Activated T-helper 2 cell treated with anti-CD3 and anti-CD28 coated beads, Interferon-gamma antibody, Interleukin-2, Interleukin-4, amounts not matched to agents 10 μg/mL and 5 μg/mL and 100 μg/mL, durations not matched to agents 14 hours and 24 hours and 36 hours (primary cell): ENCODE measurements at regions of chr20 and their contacts with region 1.

Region 1: GRCh38 chr20:38221119-38221589 is 39.4 kb downstream of the KIAA1755 start:
- DNase-seq: peak; percentile 40
- H3K4me3 Mint-ChIP-seq: no peak overlapping the region
- H3K27ac Mint-ChIP-seq: no peak overlapping the region
- H3K4me1 Mint-ChIP-seq: no peaks in the 10 kb centered on the region
- H3K27me3 Mint-ChIP-seq: no peaks in the 10 kb centered on the region

Region 2: DNA sequence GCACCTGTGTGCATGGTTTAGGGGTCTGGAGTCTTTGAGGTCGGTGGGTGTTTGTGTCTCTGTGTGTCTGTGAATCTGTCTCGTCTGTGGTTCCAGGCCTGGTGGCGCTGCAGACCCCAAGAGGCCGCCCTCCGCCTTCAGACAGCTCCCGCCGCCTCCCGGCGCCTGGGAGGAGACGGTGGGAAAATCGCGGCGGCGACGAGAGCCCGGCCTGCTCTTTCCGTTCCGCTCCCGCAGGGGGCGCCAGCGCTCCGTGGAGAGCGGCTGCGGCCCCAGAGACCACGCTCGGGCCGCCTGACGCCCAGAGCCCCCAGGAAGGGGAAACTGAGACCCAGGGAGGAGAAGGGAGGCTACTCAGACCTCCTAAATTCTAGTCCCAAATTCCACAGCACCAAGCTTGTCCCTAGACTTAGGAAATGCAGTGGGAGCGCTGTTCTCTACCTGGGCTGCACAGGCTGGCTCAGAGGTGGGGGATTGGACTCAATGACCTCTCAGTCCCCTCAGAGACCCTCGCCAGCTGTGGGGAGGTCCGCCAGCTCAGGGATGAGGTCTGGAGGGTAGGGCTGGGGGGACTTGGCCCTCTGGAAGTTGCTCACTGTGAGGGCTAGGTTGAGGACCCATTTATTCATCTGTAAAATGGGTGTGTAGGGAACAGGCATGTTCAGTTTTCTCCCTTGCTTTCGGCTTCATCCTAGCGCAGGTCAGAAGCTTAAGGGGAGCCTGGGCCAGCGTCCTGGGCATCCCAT is 656.6 kb before region 1 on chr20:
- intact Hi-C with region 1: loop called (anchors 10 kb)
- DNase-seq: peak; percentile 22
- H3K4me3 Mint-ChIP-seq: no peak overlapping the region
- H3K27ac Mint-ChIP-seq: no peak overlapping the region
- H3K4me1 Mint-ChIP-seq: no peaks in the 10 kb centered on the region
- H3K27me3 Mint-ChIP-seq: peaks cover 32% of the 10 kb centered on the region

Region 3: DNA sequence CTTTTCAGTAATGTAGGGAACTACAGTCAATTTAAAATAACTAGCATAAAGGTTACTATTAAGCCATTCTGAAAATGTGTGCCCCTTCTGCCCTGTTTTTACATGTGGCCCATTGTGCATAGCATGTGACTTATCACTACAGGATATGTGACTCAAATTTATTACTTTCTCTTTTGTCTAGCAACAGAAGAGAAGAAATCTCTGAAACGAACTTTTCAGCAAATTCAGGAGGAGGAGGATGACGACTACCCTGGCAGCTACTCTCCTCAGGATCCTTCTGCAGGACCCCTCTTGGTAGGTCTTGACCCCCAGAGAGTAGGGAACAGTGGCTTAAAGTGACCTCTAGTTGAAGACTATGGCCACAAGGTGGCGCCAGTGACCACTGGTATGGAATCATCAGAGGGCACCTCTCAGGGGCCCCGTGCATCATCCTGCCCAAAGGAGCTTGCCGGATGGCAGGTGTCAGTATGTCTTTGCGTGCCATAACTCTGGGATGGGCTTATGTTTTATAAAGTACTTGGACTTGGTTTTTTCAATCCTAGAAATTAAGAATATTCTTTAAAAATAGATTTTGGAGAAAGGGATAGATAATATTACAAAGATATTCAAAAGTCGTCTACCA is 163.7 kb before region 1 on chr20:
- intact Hi-C with region 1: loop called (anchors 1 kb)
- DNase-seq: peak; percentile 50
- H3K4me3 Mint-ChIP-seq: no peak overlapping the region
- H3K27ac Mint-ChIP-seq: peak overlapping the region; percentile 79
- H3K4me1 Mint-ChIP-seq: peaks cover 35% of the 10 kb centered on the region
- H3K27me3 Mint-ChIP-seq: no peaks in the 10 kb centered on the region

Region 4: GRCh38 chr20:38073307-38074071 is 147.7 kb before region 1 on chr20:
- intact Hi-C with region 1: loop called (anchors 5 kb)
- DNase-seq: no peak
- H3K4me3 Mint-ChIP-seq: no peak overlapping the region
- H3K27ac Mint-ChIP-seq: no peak overlapping the region
- H3K4me1 Mint-ChIP-seq: peaks cover 3% of the 10 kb centered on the region
- H3K27me3 Mint-ChIP-seq: no peaks in the 10 kb centered on the region

Region 5: GRCh38 chr20:38255393-38255792 is 34.2 kb after region 1 on chr20:
- intact Hi-C with region 1: no loop called
- DNase-seq: no peak
- H3K4me3 Mint-ChIP-seq: no peak overlapping the region
- H3K27ac Mint-ChIP-seq: no peak overlapping the region
- H3K4me1 Mint-ChIP-seq: no peaks in the 10 kb centered on the region
- H3K27me3 Mint-ChIP-seq: peaks cover 25% of the 10 kb centered on the region

Region 6: GRCh38 chr20:38270869-38271605 is 49.9 kb after region 1 on chr20:
- intact Hi-C with region 1: no loop called
- DNase-seq: no peak
- H3K4me3 Mint-ChIP-seq: no peak overlapping the region
- H3K27ac Mint-ChIP-seq: no peak overlapping the region
- H3K4me1 Mint-ChIP-seq: no peaks in the 10 kb centered on the region
- H3K27me3 Mint-ChIP-seq: peaks cover 9% of the 10 kb centered on the region

Region 7: GRCh38 chr20:38337561-38338140 is 116.5 kb after region 1 on chr20:
- intact Hi-C with region 1: no loop called
- DNase-seq: no peak
- H3K4me3 Mint-ChIP-seq: no peak overlapping the region
- H3K27ac Mint-ChIP-seq: no peak overlapping the region
- H3K4me1 Mint-ChIP-seq: no peaks in the 10 kb centered on the region
- H3K27me3 Mint-ChIP-seq: peaks cover 6% of the 10 kb centered on the region